ENCODE measurements at regions of chr15 and their contacts with region 1.

Region 1: DNA sequence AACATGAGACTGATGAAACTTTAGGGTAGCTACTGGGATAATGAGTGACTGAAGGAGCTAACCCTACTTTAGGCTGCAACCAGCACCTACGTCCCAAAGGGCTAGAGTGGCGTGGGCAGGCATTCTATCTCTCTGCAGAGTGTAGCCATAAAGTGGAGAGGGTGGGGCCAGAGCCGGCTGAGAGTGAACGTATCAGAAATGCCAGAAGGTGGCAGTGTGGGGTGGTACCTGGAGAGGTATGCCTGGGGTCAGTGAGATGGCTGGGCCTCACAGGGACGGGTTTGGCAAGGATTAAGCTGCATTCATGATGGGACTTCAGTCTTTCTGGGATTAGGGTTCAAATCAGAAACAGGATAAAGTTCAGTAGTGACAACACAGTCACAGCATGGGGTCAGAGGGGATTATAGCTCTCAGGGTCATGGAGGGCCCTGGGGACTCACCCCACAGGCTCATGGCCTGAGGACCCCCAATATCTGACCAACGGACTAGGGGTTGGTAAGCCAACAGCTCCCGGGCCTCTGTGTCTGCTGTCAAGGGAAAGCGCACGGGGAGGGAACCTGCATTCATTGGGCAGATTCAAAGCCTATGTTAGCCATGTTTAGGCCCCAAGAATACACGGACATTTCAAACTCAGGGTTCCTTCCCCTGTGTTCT is 86.5 kb upstream of the FOXB1 start:
- DNase-seq: peak; percentile 56 to 88
- H3K4me3 ChIP-seq: no peak overlapping the region
- H3K27ac ChIP-seq: no peak overlapping the region
- H3K4me1 ChIP-seq: peaks cover 0 to 8% (median 5%) of the 10 kb centered on the region in 4 experiments; a peak in 4 of 7 replicates
- H3K27me3 ChIP-seq: no peaks in the 10 kb centered on the region
- CTCF ChIP-seq: peak; percentile 71 to 93 (median 83)
- EP300 ChIP-seq: no peak
- POLR2A ChIP-seq: no peak
- RAD21 ChIP-seq: peak; percentile 89 to 95

Region 2: GRCh38 chr15:59583088-59583487 is 334.5 kb before region 1 on chr15:
- CTCF ChIA-PET with region 1: no interaction called
- POLR2A ChIA-PET with region 1: no interaction called
- DNase-seq: no peak
- H3K4me3 ChIP-seq: no peak overlapping the region
- H3K27ac ChIP-seq: no peak overlapping the region
- H3K4me1 ChIP-seq: no peaks in the 10 kb centered on the region
- H3K27me3 ChIP-seq: no peaks in the 10 kb centered on the region
- CTCF ChIP-seq: no peak
- EP300 ChIP-seq: no peak
- POLR2A ChIP-seq: no peak
- RAD21 ChIP-seq: no peak

Region 3: DNA sequence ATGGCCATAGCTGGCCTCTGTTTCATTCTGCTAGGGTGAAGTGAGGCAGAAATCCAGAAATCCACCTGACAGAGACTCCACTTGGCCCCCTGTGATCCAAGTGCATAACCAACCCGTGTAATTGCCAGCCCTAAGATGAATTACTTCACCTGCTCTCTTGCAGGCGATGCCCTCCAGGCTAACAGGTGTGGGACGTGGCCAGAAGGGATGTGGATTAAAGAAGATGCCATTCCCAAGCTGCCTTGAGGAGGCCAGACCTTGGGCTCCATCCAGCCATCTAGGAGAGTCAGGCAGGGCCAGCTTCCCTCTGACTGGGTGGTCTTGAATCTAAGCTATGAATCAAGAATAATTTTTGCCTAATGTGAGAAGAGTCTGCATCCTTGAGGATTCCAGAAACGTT is 74.0 kb before region 1 on chr15:
- CTCF ChIA-PET with region 1: interaction called, 11 read pairs
- POLR2A ChIA-PET with region 1: no interaction called
- DNase-seq: no peak
- H3K4me3 ChIP-seq: no peak overlapping the region
- H3K27ac ChIP-seq: no peak overlapping the region
- H3K4me1 ChIP-seq: no peaks in the 10 kb centered on the region
- H3K27me3 ChIP-seq: no peaks in the 10 kb centered on the region; a peak in 1 of 7 replicates
- CTCF ChIP-seq: no peak
- EP300 ChIP-seq: no peak
- POLR2A ChIP-seq: no peak
- RAD21 ChIP-seq: no peak

Region 4: GRCh38 chr15:59933607-59934006 is 16.0 kb after region 1 on chr15:
- CTCF ChIA-PET with region 1: interaction called, 14 read pairs
- POLR2A ChIA-PET with region 1: no interaction called
- DNase-seq: no peak
- H3K4me3 ChIP-seq: no peak overlapping the region
- H3K27ac ChIP-seq: no peak overlapping the region
- H3K4me1 ChIP-seq: peaks cover 0 to 7% (median 3%) of the 10 kb centered on the region in 4 experiments; a peak in 5 of 7 replicates
- H3K27me3 ChIP-seq: no peaks in the 10 kb centered on the region
- CTCF ChIP-seq: no peak
- EP300 ChIP-seq: no peak
- POLR2A ChIP-seq: no peak
- RAD21 ChIP-seq: no peak

Region 5: GRCh38 chr15:59976480-59977271 is 59.0 kb after region 1 on chr15:
- CTCF ChIA-PET with region 1: no interaction called
- POLR2A ChIA-PET with region 1: no interaction called
- DNase-seq: no peak
- H3K4me3 ChIP-seq: no peak overlapping the region
- H3K27ac ChIP-seq: no peak overlapping the region
- H3K4me1 ChIP-seq: no peaks in the 10 kb centered on the region
- H3K27me3 ChIP-seq: no peaks in the 10 kb centered on the region
- CTCF ChIP-seq: no peak
- EP300 ChIP-seq: no peak
- POLR2A ChIP-seq: no peak
- RAD21 ChIP-seq: no peak

Region 6: GRCh38 chr15:60004009-60004851 is 86.6 kb after region 1 on chr15 and contains the start of gene FOXB1:
- CTCF ChIA-PET with region 1: interaction called, 24 read pairs
- POLR2A ChIA-PET with region 1: no interaction called
- DNase-seq: peak in 1 of 2 experiments; percentile 79
- H3K4me3 ChIP-seq: peak within 1 kb of the TSS; percentile 54 to 74 (median 62)
- H3K27ac ChIP-seq: no peak within 1 kb of the TSS
- H3K4me1 ChIP-seq: peaks cover 14 to 42% (median 24%) of the 10 kb centered on the region in 4 experiments
- H3K27me3 ChIP-seq: peaks cover 25 to 65% (median 55%) of the 10 kb centered on the region in 4 experiments; a peak in 6 of 7 replicates
- CTCF ChIP-seq: peak in 2 of 3 experiments; percentile 27 to 36; a peak in 3 of 4 replicates
- EP300 ChIP-seq: no peak
- POLR2A ChIP-seq: no peak
- RAD21 ChIP-seq: peak in 1 of 2 experiments; percentile 29; a peak in 1 of 4 replicates
- total RNA-seq, gene FOXB1: 1.5 and 2.1 TPM in 2 replicates

Region 7: GRCh38 chr15:60128000-60128376 is 210.4 kb after region 1 on chr15:
- CTCF ChIA-PET with region 1: interaction called, 24 read pairs
- POLR2A ChIA-PET with region 1: no interaction called
- DNase-seq: no peak
- H3K4me3 ChIP-seq: peak overlapping the region; percentile 19 to 47 (median 24); a peak in 4 of 8 replicates
- H3K27ac ChIP-seq: no peak overlapping the region
- H3K4me1 ChIP-seq: peaks cover 0 to 14% (median 7%) of the 10 kb centered on the region in 4 experiments; a peak in 5 of 7 replicates
- H3K27me3 ChIP-seq: no peaks in the 10 kb centered on the region
- CTCF ChIP-seq: no peak
- EP300 ChIP-seq: no peak
- POLR2A ChIP-seq: no peak
- RAD21 ChIP-seq: no peak